ENCODE measurements at regions of chr10 and their contacts with region 1.

Region 1: GRCh38 chr10:74432841-74433594 is 282.0 kb downstream of the ADK start:
- DNase-seq: no peak
- H3K4me3 ChIP-seq: no peak overlapping the region
- H3K27ac ChIP-seq: no peak overlapping the region
- H3K4me1 ChIP-seq: no peaks in the 10 kb centered on the region
- H3K27me3 ChIP-seq: no peaks in the 10 kb centered on the region
- CTCF ChIP-seq: no peak
- EP300 ChIP-seq: no peak
- POLR2A ChIP-seq: no peak
- RAD21 ChIP-seq: no peak

Region 2: DNA sequence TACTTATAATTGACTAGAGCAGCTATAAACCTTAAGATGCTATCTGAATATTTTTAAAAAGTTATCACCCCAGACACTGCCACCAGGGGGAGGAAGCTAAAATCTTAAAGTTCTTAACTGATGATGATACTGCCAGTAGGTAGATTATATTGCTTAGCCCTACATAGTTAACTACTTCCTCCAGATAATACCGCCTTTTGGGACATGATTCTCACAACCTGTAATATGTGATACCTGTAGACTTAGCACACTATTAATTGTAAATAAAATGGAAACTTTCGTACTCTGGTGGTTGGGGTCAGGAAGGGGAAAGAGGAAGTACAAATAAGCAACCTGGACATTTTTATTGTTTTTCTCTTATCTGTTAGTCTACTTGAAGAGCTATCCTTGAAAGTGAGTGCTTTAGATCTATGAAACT is 13.1 kb before region 1 on chr10:
- CTCF ChIA-PET with region 1: interaction called, 27 read pairs
- POLR2A ChIA-PET with region 1: no interaction called
- DNase-seq: no peak
- H3K4me3 ChIP-seq: no peak overlapping the region
- H3K27ac ChIP-seq: no peak overlapping the region
- H3K4me1 ChIP-seq: peaks cover 0 to 16% (median 6%) of the 10 kb centered on the region in 4 experiments; a peak in 5 of 7 replicates
- H3K27me3 ChIP-seq: no peaks in the 10 kb centered on the region
- CTCF ChIP-seq: no peak; a peak in 1 of 4 replicates
- EP300 ChIP-seq: no peak
- POLR2A ChIP-seq: no peak
- RAD21 ChIP-seq: peak; percentile 35 to 41